Transverse colon (tissue), 4 donors: ENCODE measurements at regions of chr21 and their contacts with region 1.

Region 1: GRCh38 chr21:43975495-43975993 is 36.6 kb upstream of the TRAPPC10 start:
- DNase-seq: peak; percentile 82
- H3K4me3 ChIP-seq: no peak overlapping the region
- H3K27ac ChIP-seq: no peak overlapping the region
- H3K4me1 ChIP-seq: no peaks in the 10 kb centered on the region
- H3K27me3 ChIP-seq: no peaks in the 10 kb centered on the region
- CTCF ChIP-seq: peak; percentile 90 to 95 (median 94)
- EP300 ChIP-seq: no peak
- POLR2A ChIP-seq: no peak

Region 2: DNA sequence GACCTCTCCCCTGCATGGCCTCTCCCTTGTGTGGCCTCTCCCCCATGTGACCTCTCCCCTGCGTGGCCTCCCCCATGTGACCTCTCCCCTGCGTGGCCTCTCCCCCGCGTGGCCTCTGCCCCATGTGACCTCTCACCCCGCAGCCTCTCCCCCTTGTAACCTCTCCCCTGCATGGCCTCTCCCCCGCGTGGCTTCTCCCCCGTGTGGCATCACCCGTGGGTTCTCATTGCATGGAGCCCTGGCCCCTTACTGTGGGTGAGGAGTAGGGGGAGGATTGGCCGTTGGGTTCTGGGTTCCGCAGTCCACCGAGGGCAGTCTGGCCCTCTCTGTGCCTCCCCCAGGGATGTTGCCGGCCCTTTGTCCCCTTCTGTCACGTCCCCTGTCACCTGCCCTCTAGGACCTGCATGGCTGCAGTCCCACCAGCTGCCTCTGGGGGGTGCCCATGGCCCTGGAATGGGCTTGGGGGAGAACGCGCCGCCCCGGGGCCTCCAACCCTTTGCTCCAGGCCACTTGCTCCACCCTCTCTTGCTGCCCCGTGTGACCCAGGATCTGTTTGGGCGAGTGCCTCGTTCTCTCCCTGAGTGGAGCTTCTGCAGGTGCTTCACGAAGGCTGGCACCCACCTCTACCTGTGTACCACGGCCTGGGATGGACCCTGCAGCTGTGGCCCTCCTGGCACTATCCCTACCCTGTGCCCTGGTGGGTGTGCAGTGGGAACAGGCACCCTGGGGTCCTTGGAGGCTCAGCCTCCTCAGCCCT is 164.9 kb before region 1 on chr21:
- in situ Hi-C with region 1: loop called in 1 of 4 experiments (anchors 25 kb)
- intact Hi-C with region 1: no loop called
- DNase-seq: peak; percentile 93
- H3K4me3 ChIP-seq: peak overlapping the region in 1 of 4 donors; percentile 9
- H3K27ac ChIP-seq: peak overlapping the region in 1 of 4 donors; percentile 54
- H3K4me1 ChIP-seq: peaks cover 7 to 36% (median 27%) of the 10 kb centered on the region in 4 donors
- H3K27me3 ChIP-seq: no peaks in the 10 kb centered on the region
- CTCF ChIP-seq: peak; percentile 93 to 98 (median 96)
- EP300 ChIP-seq: no peak
- POLR2A ChIP-seq: no peak

Region 3: GRCh38 chr21:43854773-43855633 is 120.5 kb before region 1 on chr21:
- in situ Hi-C with region 1: no loop called
- intact Hi-C with region 1: no loop called
- DNase-seq: no peak
- H3K4me3 ChIP-seq: no peak overlapping the region
- H3K27ac ChIP-seq: no peak overlapping the region
- H3K4me1 ChIP-seq: peaks cover 0 to 1% (median 0%) of the 10 kb centered on the region in 4 donors
- H3K27me3 ChIP-seq: no peaks in the 10 kb centered on the region
- CTCF ChIP-seq: no peak
- EP300 ChIP-seq: no peak
- POLR2A ChIP-seq: no peak

Region 4: DNA sequence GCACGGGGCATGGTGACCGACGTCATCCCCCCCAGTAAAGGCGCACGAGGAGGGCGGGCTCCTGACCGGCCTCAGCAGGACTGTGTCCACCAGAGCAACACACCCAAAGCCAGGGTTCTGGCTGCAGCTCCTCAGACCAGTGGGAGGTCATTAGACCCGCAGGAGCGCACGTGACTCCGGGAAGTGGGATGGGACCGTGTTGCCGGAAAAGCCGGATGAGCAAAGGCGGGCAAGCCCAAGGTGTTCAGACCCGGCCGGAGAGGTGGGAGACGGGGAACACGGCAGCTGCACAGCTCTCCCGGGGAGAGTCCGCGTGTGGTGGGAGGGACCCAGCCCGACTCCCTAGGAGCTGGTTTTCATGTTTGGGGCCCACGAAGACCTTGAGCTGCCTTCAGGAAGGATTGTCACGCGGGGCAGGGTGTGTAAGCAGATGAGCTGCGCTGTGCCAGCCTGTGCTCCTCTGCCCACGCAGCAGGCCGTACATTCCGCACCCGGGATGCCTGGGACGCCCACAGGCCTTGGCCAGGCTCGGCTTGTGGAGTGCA is 16.0 kb after region 1 on chr21:
- in situ Hi-C with region 1: no loop called
- intact Hi-C with region 1: loop called (anchors 1 kb)
- DNase-seq: no peak
- H3K4me3 ChIP-seq: no peak overlapping the region
- H3K27ac ChIP-seq: no peak overlapping the region
- H3K4me1 ChIP-seq: no peaks in the 10 kb centered on the region
- H3K27me3 ChIP-seq: no peaks in the 10 kb centered on the region
- CTCF ChIP-seq: no peak
- EP300 ChIP-seq: no peak
- POLR2A ChIP-seq: no peak